ENCODE measurements at regions of chr13 and their contacts with region 1.

Region 1: GRCh38 chr13:50081679-50082425 is 66.6 kb downstream of the KCNRG start:
- DNase-seq: peak; percentile 94 to 99 (median 99)
- ATAC-seq: peak; percentile 88
- H3K4me3 ChIP-seq: peak overlapping the region; percentile 63
- H3K4me3 Mint-ChIP-seq: peak overlapping the region; percentile 90 to 100 (median 95)
- H3K27ac ChIP-seq: peak overlapping the region; percentile 86
- H3K27ac Mint-ChIP-seq: peak overlapping the region; percentile 88 to 99 (median 94)
- H3K4me1 ChIP-seq: peaks cover 17% of the 10 kb centered on the region in 2 donors
- H3K4me1 Mint-ChIP-seq: peaks cover 13 to 63% (median 49%) of the 10 kb centered on the region in 7 donors
- H3K27me3 ChIP-seq: peaks cover 0 to 8% of the 10 kb centered on the region in 2 donors
- H3K27me3 Mint-ChIP-seq: peaks cover 0 to 11% (median 7%) of the 10 kb centered on the region in 5 donors

Region 2: DNA sequence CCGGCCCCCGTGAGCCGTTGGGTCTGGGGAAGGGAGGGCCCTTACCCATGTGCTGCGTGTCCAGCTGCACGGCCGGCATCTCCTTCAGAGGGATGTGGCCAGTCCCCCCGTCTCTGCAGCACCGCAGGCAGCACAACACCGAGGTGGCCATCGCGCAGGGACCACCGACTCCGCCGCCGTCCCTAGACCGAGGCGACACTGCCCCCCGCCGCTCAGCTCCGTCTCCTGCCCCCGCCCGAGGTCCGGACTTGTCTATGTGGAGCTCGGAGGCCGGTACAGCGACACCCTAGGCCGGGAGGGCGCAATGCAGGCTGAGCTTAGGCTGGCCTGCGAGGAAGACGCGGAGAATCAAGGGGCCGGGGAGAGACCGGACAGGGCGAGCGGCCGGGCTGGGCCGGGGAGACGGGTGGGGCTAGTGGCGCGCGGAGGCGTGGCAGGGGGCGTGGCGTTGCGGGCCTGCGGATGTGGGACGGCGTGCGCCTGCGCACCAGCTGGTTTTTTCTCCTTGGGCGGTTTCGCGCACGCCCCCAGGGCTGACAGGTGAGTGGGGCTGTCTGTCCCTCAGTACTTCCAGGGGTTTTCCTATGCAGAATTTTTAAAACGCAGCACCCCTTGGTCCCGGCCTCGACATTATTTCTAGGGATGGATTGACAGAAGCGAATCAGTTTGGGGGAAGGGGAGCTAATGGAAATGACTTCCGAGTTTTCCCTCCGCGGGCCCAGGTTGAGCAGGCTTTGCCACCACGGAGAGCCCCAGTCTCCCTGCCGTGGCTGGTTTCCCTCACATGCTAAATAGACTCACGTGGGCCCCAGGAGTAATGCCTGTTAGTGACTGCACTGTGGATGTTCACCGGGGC is 145.5 kb before region 1 on chr13 and contains the start of gene SPRYD7:
- CTCF ChIA-PET with region 1: no interaction called
- POLR2A ChIA-PET with region 1: interaction called, 3 read pairs
- intact Hi-C with region 1: loop called (anchors 1 kb)
- DNase-seq: peak; percentile 82 to 99 (median 90)
- ATAC-seq: peak; percentile 98
- H3K4me3 ChIP-seq: peak within 1 kb of the TSS; percentile 99
- H3K4me3 Mint-ChIP-seq: peak within 1 kb of the TSS; percentile 86 to 99 (median 96)
- H3K27ac ChIP-seq: peak within 1 kb of the TSS; percentile 69
- H3K27ac Mint-ChIP-seq: peak within 1 kb of the TSS; percentile 74 to 95 (median 86)
- H3K4me1 ChIP-seq: peaks cover 10 to 14% of the 10 kb centered on the region in 2 donors
- H3K4me1 Mint-ChIP-seq: peaks cover 12 to 28% (median 15%) of the 10 kb centered on the region in 7 donors
- H3K27me3 ChIP-seq: no peaks in the 10 kb centered on the region
- H3K27me3 Mint-ChIP-seq: peaks cover 0 to 33% (median 0%) of the 10 kb centered on the region in 5 donors
- total RNA-seq, gene SPRYD7: 1.7 to 3.1 (median 2.3) TPM

Region 3: GRCh38 chr13:50106559-50106958 is 24.7 kb after region 1 on chr13:
- CTCF ChIA-PET with region 1: interaction called, 7 read pairs
- POLR2A ChIA-PET with region 1: interaction called, 5 read pairs
- intact Hi-C with region 1: loop called (anchors 1 to 2 kb)
- DNase-seq: peak in 3 of 9 donors; percentile 14 to 37 (median 29)
- ATAC-seq: peak; percentile 64
- H3K4me3 ChIP-seq: no peak overlapping the region
- H3K4me3 Mint-ChIP-seq: peak overlapping the region in 9 of 10 donors; percentile 30 to 81 (median 61)
- H3K27ac ChIP-seq: peak overlapping the region; percentile 38
- H3K27ac Mint-ChIP-seq: peak overlapping the region; percentile 74 to 94 (median 93)
- H3K4me1 ChIP-seq: peaks cover 16 to 21% of the 10 kb centered on the region in 2 donors
- H3K4me1 Mint-ChIP-seq: peaks cover 22 to 75% (median 56%) of the 10 kb centered on the region in 7 donors
- H3K27me3 ChIP-seq: no peaks in the 10 kb centered on the region
- H3K27me3 Mint-ChIP-seq: no peaks in the 10 kb centered on the region

Region 4: GRCh38 chr13:50236898-50237318 is 155.1 kb after region 1 on chr13:
- CTCF ChIA-PET with region 1: interaction called, 3 read pairs
- POLR2A ChIA-PET with region 1: interaction called, 3 read pairs
- intact Hi-C with region 1: loop called (anchors 2 kb)
- DNase-seq: peak in 4 of 9 donors; percentile 5 to 38 (median 14)
- ATAC-seq: peak; percentile 88
- H3K4me3 ChIP-seq: peak overlapping the region; percentile 43
- H3K4me3 Mint-ChIP-seq: peak overlapping the region; percentile 38 to 78 (median 65)
- H3K27ac ChIP-seq: no peak overlapping the region
- H3K27ac Mint-ChIP-seq: peak overlapping the region; percentile 3 to 66 (median 15)
- H3K4me1 ChIP-seq: peaks cover 5 to 8% of the 10 kb centered on the region in 2 donors
- H3K4me1 Mint-ChIP-seq: peaks cover 6 to 40% (median 19%) of the 10 kb centered on the region in 7 donors
- H3K27me3 ChIP-seq: no peaks in the 10 kb centered on the region
- H3K27me3 Mint-ChIP-seq: peaks cover 0 to 68% (median 0%) of the 10 kb centered on the region in 5 donors

Region 5: GRCh38 chr13:50387051-50387581 is 305.3 kb after region 1 on chr13:
- CTCF ChIA-PET with region 1: interaction called, 6 read pairs
- POLR2A ChIA-PET with region 1: no interaction called
- intact Hi-C with region 1: loop called in 1 of 2 experiments (anchors 1 kb)
- DNase-seq: peak in 2 of 9 donors; percentile 16 to 24
- ATAC-seq: peak; percentile 47
- H3K4me3 ChIP-seq: no peak overlapping the region
- H3K4me3 Mint-ChIP-seq: no peak overlapping the region
- H3K27ac ChIP-seq: no peak overlapping the region
- H3K27ac Mint-ChIP-seq: no peak overlapping the region
- H3K4me1 ChIP-seq: peaks cover 0 to 6% of the 10 kb centered on the region in 2 donors
- H3K4me1 Mint-ChIP-seq: peaks cover 0 to 5% (median 0%) of the 10 kb centered on the region in 7 donors
- H3K27me3 ChIP-seq: no peaks in the 10 kb centered on the region
- H3K27me3 Mint-ChIP-seq: peaks cover 0 to 39% (median 0%) of the 10 kb centered on the region in 5 donors

Region 6: DNA sequence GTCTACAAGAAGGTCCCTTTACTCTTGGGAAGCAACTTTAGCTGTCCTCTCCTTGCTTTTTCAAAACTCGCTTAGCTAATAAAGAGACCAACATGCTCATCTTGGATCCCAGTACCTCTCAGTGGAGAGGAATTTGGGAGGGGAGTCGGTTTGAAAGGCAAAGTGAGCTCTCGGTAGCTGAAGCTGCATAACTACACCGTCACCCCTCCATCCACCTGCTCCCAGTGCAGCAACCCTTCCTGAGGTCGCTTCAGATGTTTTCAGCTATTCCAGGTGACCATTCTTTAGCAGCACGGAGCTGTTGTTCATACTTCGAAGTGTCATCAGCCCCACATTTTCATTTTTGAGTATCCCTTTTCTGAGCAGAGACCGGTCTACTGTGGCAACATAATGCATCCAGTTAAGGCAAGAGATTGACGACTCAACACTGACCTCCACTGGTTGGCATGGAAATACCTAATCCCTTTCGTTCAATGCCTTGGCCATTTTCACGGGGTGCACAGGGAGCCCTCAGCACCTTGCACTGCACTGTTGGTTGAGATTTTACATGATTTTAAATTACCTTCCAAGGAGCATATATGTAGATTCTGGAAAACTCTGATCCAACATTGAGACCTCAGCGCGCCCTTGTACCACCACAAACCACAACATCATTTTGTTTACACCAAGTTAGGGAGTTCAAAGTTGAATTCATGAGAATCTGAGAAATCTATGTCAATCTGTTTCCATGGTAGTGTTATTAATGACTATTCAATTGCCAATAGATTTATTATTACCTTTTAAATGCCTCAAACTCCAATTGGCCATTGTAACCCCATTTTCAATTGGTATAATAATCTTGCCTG is 719.5 kb after region 1 on chr13:
- CTCF ChIA-PET with region 1: no interaction called
- POLR2A ChIA-PET with region 1: no interaction called
- intact Hi-C with region 1: loop called (anchors 1 to 2 kb)
- DNase-seq: peak; percentile 13 to 71 (median 56)
- ATAC-seq: peak; percentile 96
- H3K4me3 ChIP-seq: no peak overlapping the region
- H3K4me3 Mint-ChIP-seq: peak overlapping the region in 1 of 10 donors; percentile 39
- H3K27ac ChIP-seq: no peak overlapping the region
- H3K27ac Mint-ChIP-seq: peak overlapping the region in 1 of 9 donors; percentile 20
- H3K4me1 ChIP-seq: peaks cover 0 to 3% of the 10 kb centered on the region in 2 donors
- H3K4me1 Mint-ChIP-seq: peaks cover 0 to 26% (median 6%) of the 10 kb centered on the region in 7 donors
- H3K27me3 ChIP-seq: no peaks in the 10 kb centered on the region
- H3K27me3 Mint-ChIP-seq: peaks cover 0 to 8% (median 0%) of the 10 kb centered on the region in 5 donors

Region 7: GRCh38 chr13:51070005-51070649 is 988.3 kb after region 1 on chr13:
- CTCF ChIA-PET with region 1: no interaction called
- POLR2A ChIA-PET with region 1: no interaction called
- intact Hi-C with region 1: loop called (anchors 1 kb)
- DNase-seq: peak; percentile 43 to 75 (median 66)
- ATAC-seq: peak; percentile 83
- H3K4me3 ChIP-seq: no peak overlapping the region
- H3K4me3 Mint-ChIP-seq: peak overlapping the region in 2 of 10 donors; percentile 7 to 27
- H3K27ac ChIP-seq: no peak overlapping the region
- H3K27ac Mint-ChIP-seq: peak overlapping the region in 1 of 9 donors; percentile 76
- H3K4me1 ChIP-seq: no peaks in the 10 kb centered on the region
- H3K4me1 Mint-ChIP-seq: peaks cover 0 to 37% (median 7%) of the 10 kb centered on the region in 7 donors
- H3K27me3 ChIP-seq: no peaks in the 10 kb centered on the region
- H3K27me3 Mint-ChIP-seq: peaks cover 10 to 25% (median 16%) of the 10 kb centered on the region in 5 donors